PC-3 (cell line): ENCODE measurements at regions of chr1 and their contacts with region 1.

Region 1: DNA sequence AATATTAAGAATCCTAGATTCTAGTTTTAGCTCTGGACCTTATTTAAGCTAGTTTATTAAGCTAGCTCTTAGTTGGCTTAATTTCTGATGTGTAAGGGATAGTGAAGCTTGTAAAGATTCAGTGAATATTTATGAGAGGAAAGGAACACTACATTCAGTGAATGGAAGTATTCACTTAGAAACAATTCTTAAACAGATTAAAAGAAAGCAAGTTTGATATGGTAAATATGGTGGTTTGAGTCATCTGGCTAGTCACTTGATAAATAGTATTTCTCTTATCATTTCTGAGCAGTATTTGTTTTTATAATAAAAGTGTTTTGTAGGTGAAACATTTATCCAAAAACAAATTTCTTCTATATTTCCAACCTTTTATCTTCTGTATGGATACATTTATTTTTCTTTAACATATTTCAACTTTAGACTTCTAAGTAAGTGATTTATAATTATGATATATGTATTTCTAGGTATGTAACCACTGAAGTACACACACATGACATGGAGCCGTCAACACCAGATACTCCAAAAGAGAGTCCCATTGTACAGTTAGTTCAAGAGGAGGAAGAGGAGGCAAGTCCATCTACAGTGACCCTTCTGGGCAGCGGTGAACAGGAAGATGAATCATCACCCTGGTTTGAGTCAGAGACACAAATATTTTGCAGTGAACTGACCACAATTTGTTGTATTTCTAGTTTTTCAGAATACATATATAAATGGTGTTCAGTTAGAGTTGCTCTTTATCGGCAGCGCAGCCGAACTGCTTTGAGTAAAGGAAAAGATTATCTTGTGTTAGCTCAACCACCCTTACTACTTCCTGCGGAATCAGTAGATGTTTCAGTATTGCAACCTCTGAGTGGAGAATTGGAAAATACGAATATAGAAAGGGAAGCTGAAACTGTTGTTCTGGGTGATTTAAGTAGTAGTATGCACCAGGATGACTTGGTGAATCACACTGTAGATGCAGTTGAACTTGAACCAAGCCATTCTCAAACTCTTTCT is 55.6 kb downstream of the SUCO start:
- DNase-seq: peak; percentile 100
- ATAC-seq: peak; percentile 90
- H3K4me3 ChIP-seq: peak overlapping the region; percentile 46
- H3K27ac ChIP-seq: peak overlapping the region; percentile 75
- H3K4me1 ChIP-seq: peaks cover 61% of the 10 kb centered on the region
- H3K27me3 ChIP-seq: no peaks in the 10 kb centered on the region
- CTCF ChIP-seq: no peak

Region 2: GRCh38 chr1:172429331-172430127 is 159.1 kb before region 1 on chr1:
- CTCF ChIA-PET with region 1: no interaction called
- POLR2A ChIA-PET with region 1: no interaction called
- intact Hi-C with region 1: no loop called
- DNase-seq: peak; percentile 99
- ATAC-seq: peak; percentile 76
- H3K4me3 ChIP-seq: no peak overlapping the region
- H3K27ac ChIP-seq: no peak overlapping the region
- H3K4me1 ChIP-seq: peaks cover 20% of the 10 kb centered on the region
- H3K27me3 ChIP-seq: no peaks in the 10 kb centered on the region
- CTCF ChIP-seq: peak; percentile 100

Region 3: GRCh38 chr1:172443626-172444453 is 144.8 kb before region 1 on chr1 and contains the start of gene PIGC:
- CTCF ChIA-PET with region 1: interaction called, 4 read pairs
- POLR2A ChIA-PET with region 1: no interaction called
- intact Hi-C with region 1: loop called (anchors 1 kb)
- DNase-seq: peak; percentile 99
- ATAC-seq: peak; percentile 76
- H3K4me3 ChIP-seq: peak within 1 kb of the TSS; percentile 75
- H3K27ac ChIP-seq: peak within 1 kb of the TSS; percentile 69
- H3K4me1 ChIP-seq: peaks cover 47% of the 10 kb centered on the region
- H3K27me3 ChIP-seq: no peaks in the 10 kb centered on the region
- CTCF ChIP-seq: peak; percentile 100
- total RNA-seq, gene PIGC: 57.5 and 70.5 TPM in 2 replicates

Region 4: DNA sequence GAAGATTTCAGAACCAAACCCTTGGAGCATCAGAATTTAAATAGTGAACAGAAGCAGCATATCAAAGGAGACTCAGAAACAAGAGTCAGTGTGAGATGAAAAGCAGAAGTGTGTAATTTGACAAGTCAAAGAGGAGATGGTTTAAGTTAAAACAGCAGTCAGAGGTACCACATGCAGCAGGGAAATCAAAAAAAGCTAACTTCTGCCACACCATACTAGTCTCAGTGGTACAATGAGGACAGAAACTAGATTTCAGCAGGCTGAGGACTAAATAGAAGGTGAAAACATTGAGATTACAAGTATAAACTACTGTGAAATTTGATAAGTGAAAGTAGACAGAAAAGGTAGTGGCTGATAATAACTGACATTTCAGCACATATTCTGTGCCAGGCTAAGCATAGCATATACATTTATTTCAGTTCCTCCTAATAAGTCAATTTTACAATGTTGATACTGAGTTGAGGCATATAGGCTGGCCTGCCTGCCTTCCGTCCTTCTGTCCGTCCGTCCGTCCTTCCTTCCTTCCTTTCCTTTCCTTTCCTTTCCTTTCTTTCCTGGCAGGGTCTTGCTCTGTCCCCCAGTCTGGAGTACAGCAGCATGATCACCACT is 43.1 kb before region 1 on chr1:
- CTCF ChIA-PET with region 1: interaction called, 3 read pairs
- POLR2A ChIA-PET with region 1: interaction called, 5 read pairs
- intact Hi-C with region 1: loop called (anchors 5 kb)
- DNase-seq: no peak
- ATAC-seq: no peak
- H3K4me3 ChIP-seq: no peak overlapping the region
- H3K27ac ChIP-seq: no peak overlapping the region
- H3K4me1 ChIP-seq: peaks cover 27% of the 10 kb centered on the region
- H3K27me3 ChIP-seq: no peaks in the 10 kb centered on the region
- CTCF ChIP-seq: no peak

Region 5: GRCh38 chr1:172602706-172603105 is 14.1 kb after region 1 on chr1:
- CTCF ChIA-PET with region 1: interaction called, 3 read pairs
- POLR2A ChIA-PET with region 1: interaction called, 3 read pairs
- intact Hi-C with region 1: loop called (anchors 1 kb)
- DNase-seq: no peak
- ATAC-seq: peak; percentile 8; the same call in 1 of the 2 replicates
- H3K4me3 ChIP-seq: no peak overlapping the region
- H3K27ac ChIP-seq: no peak overlapping the region
- H3K4me1 ChIP-seq: peaks cover 18% of the 10 kb centered on the region
- H3K27me3 ChIP-seq: no peaks in the 10 kb centered on the region
- CTCF ChIP-seq: no peak

Region 6: DNA sequence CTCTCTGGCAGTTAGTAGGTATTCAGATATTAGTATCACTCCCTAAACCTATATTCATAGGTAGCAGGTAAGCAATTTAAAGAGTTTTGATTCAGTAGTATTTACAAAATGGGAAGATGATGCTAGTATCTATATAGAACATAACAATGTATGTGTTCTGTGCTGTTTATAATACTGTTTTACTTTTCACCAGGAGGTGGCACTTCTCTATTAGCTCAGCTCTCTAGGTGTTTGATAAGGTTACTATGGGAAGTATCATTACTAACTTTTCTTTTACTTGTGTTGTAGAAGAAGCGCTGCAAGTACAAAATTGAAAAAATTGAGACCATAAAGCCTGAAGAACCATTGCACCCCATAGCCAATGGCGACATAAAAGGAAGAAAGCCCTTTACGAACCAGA is 20.9 kb after region 1 on chr1:
- CTCF ChIA-PET with region 1: interaction called, 3 read pairs
- POLR2A ChIA-PET with region 1: no interaction called
- intact Hi-C with region 1: loop called (anchors 1 kb)
- DNase-seq: peak; percentile 88
- ATAC-seq: peak; percentile 93
- H3K4me3 ChIP-seq: no peak overlapping the region
- H3K27ac ChIP-seq: no peak overlapping the region
- H3K4me1 ChIP-seq: 0 out of 2 replicates have a peak, but pooled peaks cover 8% of the 10 kb centered on the region
- H3K27me3 ChIP-seq: no peaks in the 10 kb centered on the region
- CTCF ChIP-seq: peak; percentile 99

Region 7: DNA sequence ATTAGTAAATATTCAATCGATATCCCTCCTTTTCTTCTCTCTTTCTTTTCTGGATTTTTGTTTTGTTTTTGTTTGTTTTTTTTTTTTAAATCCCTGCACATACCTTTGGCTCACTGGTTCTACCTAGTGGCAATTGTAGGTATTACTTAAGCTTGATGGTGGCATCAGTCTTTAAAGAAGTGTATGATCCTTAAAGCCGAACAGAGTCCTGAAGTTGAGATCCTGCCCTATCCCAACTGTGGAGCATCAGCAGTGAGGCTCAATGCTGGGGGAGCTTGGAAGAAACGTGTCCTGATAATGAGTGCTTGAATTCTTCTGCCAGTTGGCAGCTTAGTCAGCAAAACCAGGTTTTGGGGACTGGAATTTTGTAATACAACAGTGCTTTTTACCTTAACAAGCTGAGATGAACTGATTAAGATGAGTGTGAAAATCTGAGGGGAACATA is 131.1 kb after region 1 on chr1:
- CTCF ChIA-PET with region 1: interaction called, 4 read pairs
- POLR2A ChIA-PET with region 1: no interaction called
- intact Hi-C with region 1: loop called (anchors 1 kb)
- DNase-seq: peak; percentile 97
- ATAC-seq: peak; percentile 81
- H3K4me3 ChIP-seq: no peak overlapping the region
- H3K27ac ChIP-seq: no peak overlapping the region
- H3K4me1 ChIP-seq: peaks cover 32% of the 10 kb centered on the region
- H3K27me3 ChIP-seq: no peaks in the 10 kb centered on the region
- CTCF ChIP-seq: peak; percentile 100